Ovary (tissue), 10 donors: ENCODE measurements at regions of chr3 and their contacts with region 1.

Region 1: GRCh38 chr3:12984023-12984823 is 89.0 kb downstream of the IQSEC1 start:
- DNase-seq: peak in 4 of 5 donors; percentile 31 to 67 (median 62)
- H3K4me3 ChIP-seq: no peak overlapping the region
- H3K27ac ChIP-seq: no peak overlapping the region
- H3K4me1 ChIP-seq: no peaks in the 10 kb centered on the region
- H3K27me3 ChIP-seq: no peaks in the 10 kb centered on the region
- CTCF ChIP-seq: peak in 1 of 3 donors; percentile 67
- EP300 ChIP-seq: no peak
- POLR2A ChIP-seq: no peak

Region 2: DNA sequence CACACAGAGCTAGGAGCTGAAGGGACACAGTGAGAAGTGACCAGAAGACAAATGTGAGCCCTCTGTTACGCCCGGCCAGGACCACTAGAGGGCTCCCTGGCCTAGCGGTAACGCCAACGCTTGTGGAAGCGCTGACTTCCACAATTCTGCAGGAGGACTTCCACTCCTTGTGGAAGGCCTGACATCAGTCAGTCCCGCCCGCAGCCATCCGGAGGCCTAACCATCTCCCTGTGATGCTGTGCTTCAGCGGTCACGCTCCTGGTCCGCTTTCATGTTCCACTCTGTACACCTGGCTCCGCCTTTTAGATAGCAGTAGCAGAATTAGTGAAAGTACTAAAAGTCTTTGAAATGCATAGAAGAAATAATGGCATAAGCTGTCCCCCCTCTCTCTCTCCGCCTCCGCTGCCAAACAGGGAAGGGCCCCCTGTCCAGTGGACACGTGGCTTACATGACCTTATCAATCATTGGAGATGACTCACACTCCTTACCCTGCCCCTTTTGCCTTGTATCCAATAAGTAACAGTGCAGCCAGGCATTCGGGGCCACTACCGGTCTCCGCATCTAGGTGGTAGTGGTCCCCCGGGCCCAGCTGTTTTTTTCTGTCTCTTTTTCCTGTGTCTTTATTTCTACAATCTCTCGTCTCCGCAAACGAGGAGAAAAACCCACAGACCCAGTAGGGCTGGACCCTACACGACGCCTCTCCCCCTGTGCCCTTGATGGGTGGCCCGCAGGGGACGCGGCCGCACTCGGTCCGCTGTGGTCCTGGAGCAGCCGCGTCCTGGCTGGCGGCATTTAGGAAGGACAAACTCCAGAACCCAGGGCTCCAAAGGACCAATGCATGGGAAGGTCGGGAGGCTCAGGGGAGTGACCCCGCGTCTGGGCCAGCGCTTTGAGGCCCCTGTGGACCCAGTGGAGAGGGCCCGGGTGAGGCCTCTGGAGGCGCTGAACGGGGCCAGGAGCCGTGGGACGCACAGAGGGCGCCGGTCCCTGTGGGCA is 115.9 kb before region 1 on chr3:
- intact Hi-C with region 1: loop called in 2 of 4 experiments (anchors 5 to 10 kb)
- DNase-seq: peak; percentile 67 to 86 (median 83)
- H3K4me3 ChIP-seq: peak overlapping the region; percentile 5
- H3K27ac ChIP-seq: no peak overlapping the region
- H3K4me1 ChIP-seq: no peaks in the 10 kb centered on the region
- H3K27me3 ChIP-seq: no peaks in the 10 kb centered on the region
- CTCF ChIP-seq: peak; percentile 39 to 87 (median 79)
- EP300 ChIP-seq: no peak
- POLR2A ChIP-seq: no peak

Region 3: GRCh38 chr3:12884186-12884680 is 100.0 kb before region 1 on chr3:
- intact Hi-C with region 1: loop called in 1 of 4 experiments (anchors 5 kb)
- DNase-seq: peak in 3 of 5 donors; percentile 52 to 75 (median 54)
- H3K4me3 ChIP-seq: no peak overlapping the region
- H3K27ac ChIP-seq: no peak overlapping the region
- H3K4me1 ChIP-seq: peaks cover 9% of the 10 kb centered on the region
- H3K27me3 ChIP-seq: no peaks in the 10 kb centered on the region
- CTCF ChIP-seq: no peak
- EP300 ChIP-seq: no peak
- POLR2A ChIP-seq: no peak